ENCODE measurements at regions of chr9 and their contacts with region 1.

Region 1: GRCh38 chr9:69919461-69920061 is 98.9 kb downstream of the CFAP95 start:
- DNase-seq: no peak
- H3K4me3 Mint-ChIP-seq: no peak overlapping the region
- H3K27ac Mint-ChIP-seq: no peak overlapping the region
- H3K4me1 Mint-ChIP-seq: no peaks in the 10 kb centered on the region
- H3K27me3 Mint-ChIP-seq: peaks cover 17% of the 10 kb centered on the region

Region 2: GRCh38 chr9:69672596-69673310 is 246.8 kb before region 1 on chr9:
- intact Hi-C with region 1: loop called (anchors 2 kb)
- DNase-seq: peak; percentile 68
- H3K4me3 Mint-ChIP-seq: peak overlapping the region; percentile 83
- H3K27ac Mint-ChIP-seq: no peak overlapping the region
- H3K4me1 Mint-ChIP-seq: peaks cover 21% of the 10 kb centered on the region
- H3K27me3 Mint-ChIP-seq: peaks cover 40% of the 10 kb centered on the region

Region 3: GRCh38 chr9:69809304-69809863 is 110.2 kb before region 1 on chr9:
- intact Hi-C with region 1: loop called (anchors 1 kb)
- DNase-seq: peak; percentile 28
- H3K4me3 Mint-ChIP-seq: no peak overlapping the region
- H3K27ac Mint-ChIP-seq: peak overlapping the region; percentile 18
- H3K4me1 Mint-ChIP-seq: peaks cover 32% of the 10 kb centered on the region
- H3K27me3 Mint-ChIP-seq: peaks cover 4% of the 10 kb centered on the region